Common myeloid progenitor, CD34-positive (primary cell): ENCODE measurements at regions of chr16 and their contacts with region 1.

Region 1: DNA sequence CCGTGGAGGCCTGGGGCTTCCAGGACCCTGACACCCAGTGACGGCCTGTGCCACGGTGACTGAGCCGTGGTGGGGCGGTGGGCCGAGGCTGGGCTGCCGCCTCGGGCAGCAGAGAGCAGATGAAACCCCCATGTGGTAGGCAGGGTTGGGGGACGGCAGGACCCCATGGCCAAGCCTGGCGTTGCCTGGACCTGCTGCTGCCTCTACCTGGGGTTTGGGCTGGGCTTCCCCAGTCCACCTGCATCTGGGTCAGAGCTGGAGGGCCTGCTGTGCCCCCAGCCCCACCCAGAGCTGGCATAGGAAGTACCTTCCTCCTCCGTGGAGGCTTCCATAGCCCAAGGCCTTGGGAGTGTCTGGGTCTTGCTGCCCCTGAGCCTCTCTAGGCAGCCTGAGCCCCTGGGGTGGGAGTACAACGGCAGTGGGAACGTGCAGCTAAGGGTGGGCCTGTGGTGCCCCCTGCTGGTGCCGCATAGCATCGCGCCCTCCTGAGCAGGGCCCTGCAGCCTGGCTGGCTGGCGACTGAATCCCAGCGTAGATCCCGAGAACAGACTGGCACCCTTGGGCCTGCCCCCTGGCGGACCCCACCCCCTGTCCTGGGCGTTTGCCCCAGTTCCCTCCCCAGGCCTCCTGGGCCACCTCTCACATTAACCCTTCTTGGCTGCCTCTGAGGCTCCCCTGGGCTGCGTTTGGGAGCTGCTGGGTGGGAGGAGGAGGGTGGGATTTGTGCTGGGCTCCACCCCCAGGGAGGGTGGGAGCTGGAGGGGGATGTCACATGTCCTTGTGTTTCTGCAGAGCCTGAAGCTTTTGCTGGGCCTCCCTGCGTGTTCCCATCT is 12.6 kb upstream of the ATP6V0C start:
- DNase-seq: peak; percentile 82 to 91 (median 89)
- H3K4me3 ChIP-seq: peak overlapping the region in 4 of 7 experiments; percentile 10 to 68 (median 54)
- H3K27ac ChIP-seq: no peak overlapping the region
- H3K4me1 ChIP-seq: peaks cover 0 to 25% (median 18%) of the 10 kb centered on the region in 4 experiments
- H3K27me3 ChIP-seq: no peaks in the 10 kb centered on the region

Region 2: GRCh38 chr16:2429034-2429770 is 71.9 kb before region 1 on chr16 and contains the start of gene CCNF:
- CTCF ChIA-PET with region 1: interaction called, 16 read pairs
- POLR2A ChIA-PET with region 1: no interaction called
- DNase-seq: peak; percentile 93 to 97 (median 96)
- H3K4me3 ChIP-seq: peak within 1 kb of the TSS; percentile 68 to 89 (median 77)
- H3K27ac ChIP-seq: peak within 1 kb of the TSS in 1 of 2 experiments; percentile 49
- H3K4me1 ChIP-seq: peaks cover 0 to 27% (median 22%) of the 10 kb centered on the region in 4 experiments
- H3K27me3 ChIP-seq: no peaks in the 10 kb centered on the region

Region 3: GRCh38 chr16:2486645-2487516 is 14.3 kb before region 1 on chr16:
- CTCF ChIA-PET with region 1: interaction called, 42 read pairs
- POLR2A ChIA-PET with region 1: no interaction called
- DNase-seq: peak; percentile 75 to 89 (median 87)
- H3K4me3 ChIP-seq: peak overlapping the region in 3 of 7 experiments; percentile 0 to 67 (median 11)
- H3K27ac ChIP-seq: no peak overlapping the region
- H3K4me1 ChIP-seq: peaks cover 2 to 41% (median 34%) of the 10 kb centered on the region in 4 experiments
- H3K27me3 ChIP-seq: no peaks in the 10 kb centered on the region

Region 4: GRCh38 chr16:2513405-2514322 is 12.5 kb after region 1 on chr16 and contains the start of gene ATP6V0C:
- CTCF ChIA-PET with region 1: interaction called, 27 read pairs
- POLR2A ChIA-PET with region 1: interaction called, 3 read pairs
- DNase-seq: peak; percentile 89 to 94 (median 93)
- H3K4me3 ChIP-seq: peak within 1 kb of the TSS; percentile 72 to 99 (median 92)
- H3K27ac ChIP-seq: peak within 1 kb of the TSS; percentile 91 to 95
- H3K4me1 ChIP-seq: peaks cover 10 to 89% (median 84%) of the 10 kb centered on the region in 4 experiments
- H3K27me3 ChIP-seq: no peaks in the 10 kb centered on the region